Activated CD4-positive, alpha-beta memory T cell treated with anti-CD3 and anti-CD28 coated beads, Interleukin-2, amount 10 ng/mL, durations not matched to agents 7 days and 5 days (primary cell): ENCODE measurements at regions of chr19 and their contacts with region 1.

Region 1: DNA sequence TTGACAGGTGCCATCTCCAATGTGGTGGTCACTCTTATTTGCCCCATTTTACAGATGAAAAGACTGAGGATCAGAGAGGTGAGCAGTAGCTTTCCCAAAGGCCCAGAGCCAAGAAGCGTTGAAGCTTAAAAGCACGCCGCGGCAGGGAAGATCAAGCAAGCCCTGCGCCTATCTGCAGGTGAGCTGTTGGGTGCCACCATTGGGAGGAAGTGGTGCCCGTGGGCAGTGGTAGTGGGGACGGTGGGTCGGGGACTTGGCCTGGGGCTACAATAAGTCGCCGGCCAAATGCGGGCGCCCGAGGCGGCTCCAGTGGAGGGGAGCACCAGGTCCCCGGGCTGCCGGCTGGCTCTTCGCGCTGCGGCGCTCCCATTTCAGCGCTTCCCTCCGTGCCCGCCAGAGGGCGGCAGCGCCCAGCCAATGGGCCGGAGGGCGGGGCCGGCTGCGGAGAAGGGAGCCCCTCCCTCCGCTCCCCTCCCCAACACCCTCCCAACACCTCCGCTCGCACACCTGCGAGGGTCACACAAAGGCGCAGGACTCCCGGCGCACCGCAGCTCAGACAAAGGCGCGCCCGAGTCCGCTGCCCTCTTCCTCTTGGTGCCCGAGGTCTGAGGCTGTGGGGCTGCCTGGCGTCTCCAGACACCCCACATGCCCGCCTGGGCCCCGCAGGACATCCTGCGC is 744 bp upstream of the POU2F2 start:
- DNase-seq: peak; percentile 85
- H3K4me3 Mint-ChIP-seq: peak overlapping the region; percentile 82
- H3K27ac Mint-ChIP-seq: peak overlapping the region; percentile 81
- H3K4me1 Mint-ChIP-seq: peaks cover 64% of the 10 kb centered on the region
- H3K27me3 Mint-ChIP-seq: no peaks in the 10 kb centered on the region

Region 2: DNA sequence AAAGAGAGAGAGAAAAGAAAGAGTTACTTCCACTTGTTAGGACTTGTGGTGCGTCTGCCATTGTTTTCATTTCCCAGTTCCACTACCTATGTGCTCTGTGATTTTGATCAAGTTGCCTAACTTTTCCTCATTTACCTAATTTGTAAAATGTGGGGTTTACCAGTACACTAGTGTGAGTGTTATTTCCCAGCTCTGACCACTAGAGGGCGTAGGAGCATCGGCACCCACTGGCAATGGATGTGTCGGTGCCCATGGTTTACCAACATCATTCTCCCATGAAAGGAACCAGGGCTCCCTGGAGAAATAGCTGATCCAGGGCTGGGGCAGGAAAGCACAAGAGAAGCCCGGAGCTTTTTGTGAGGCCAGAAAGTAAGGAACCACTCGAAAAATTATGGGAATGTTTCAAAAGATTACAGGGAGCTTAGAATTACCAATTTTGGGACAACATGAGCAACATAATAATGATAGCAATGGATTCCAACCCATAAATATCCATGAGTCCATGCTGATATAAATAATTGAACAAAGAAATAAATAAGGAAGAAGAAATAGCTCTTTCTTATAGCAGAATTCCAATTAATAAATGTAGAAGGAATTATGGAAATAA is 491.0 kb before region 1 on chr19:
- CTCF ChIA-PET with region 1: no interaction called
- POLR2A ChIA-PET with region 1: no interaction called
- DNase-seq: peak; percentile 67
- H3K4me3 Mint-ChIP-seq: no peak overlapping the region
- H3K27ac Mint-ChIP-seq: no peak overlapping the region
- H3K4me1 Mint-ChIP-seq: peaks cover 2% of the 10 kb centered on the region
- H3K27me3 Mint-ChIP-seq: peaks cover 18% of the 10 kb centered on the region

Region 3: DNA sequence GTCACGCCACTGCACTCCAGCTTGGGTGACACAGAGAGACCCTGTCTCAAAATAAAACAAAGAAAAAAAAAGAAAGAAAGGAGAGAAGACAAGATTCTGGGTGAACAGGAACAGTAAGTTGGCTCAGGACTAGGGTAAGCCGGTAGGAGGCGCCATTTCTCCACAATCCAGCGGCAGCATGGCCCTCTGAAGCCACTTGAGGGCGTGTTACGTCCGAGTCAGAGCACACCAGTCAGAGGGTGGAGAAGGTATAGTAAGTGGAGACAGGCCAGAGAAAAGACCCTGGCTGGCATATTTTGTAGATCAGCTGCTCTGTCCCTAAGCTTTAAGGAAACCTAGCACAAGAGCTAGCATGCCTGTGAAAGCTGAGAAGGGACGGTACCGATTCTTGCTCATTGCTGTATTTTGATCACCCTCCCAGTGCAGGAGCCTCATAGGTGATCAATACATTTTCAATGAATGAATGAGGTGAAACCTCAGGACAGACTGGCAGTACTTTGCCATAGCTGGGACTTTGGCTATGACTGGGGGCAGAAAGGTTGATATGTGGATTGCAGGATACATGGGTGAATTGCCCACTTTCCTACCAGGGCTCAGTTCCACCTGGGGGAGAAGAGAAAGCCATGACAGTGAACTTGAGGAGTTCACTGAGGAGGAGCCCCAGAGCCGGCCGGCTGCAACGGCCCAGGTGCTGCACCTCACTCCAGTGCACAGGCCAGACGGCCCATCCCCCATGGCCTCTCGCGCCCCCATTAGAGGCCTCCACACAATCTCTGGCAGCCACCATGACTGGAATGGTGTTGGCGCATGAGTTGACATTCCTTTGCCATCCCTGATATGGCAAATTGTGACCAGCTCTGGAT is 24.2 kb before region 1 on chr19:
- CTCF ChIA-PET with region 1: interaction called, 10 read pairs
- POLR2A ChIA-PET with region 1: interaction called, 3 read pairs
- DNase-seq: peak; percentile 92
- H3K4me3 Mint-ChIP-seq: no peak overlapping the region
- H3K27ac Mint-ChIP-seq: no peak overlapping the region
- H3K4me1 Mint-ChIP-seq: peaks cover 34% of the 10 kb centered on the region
- H3K27me3 Mint-ChIP-seq: no peaks in the 10 kb centered on the region

Region 4: DNA sequence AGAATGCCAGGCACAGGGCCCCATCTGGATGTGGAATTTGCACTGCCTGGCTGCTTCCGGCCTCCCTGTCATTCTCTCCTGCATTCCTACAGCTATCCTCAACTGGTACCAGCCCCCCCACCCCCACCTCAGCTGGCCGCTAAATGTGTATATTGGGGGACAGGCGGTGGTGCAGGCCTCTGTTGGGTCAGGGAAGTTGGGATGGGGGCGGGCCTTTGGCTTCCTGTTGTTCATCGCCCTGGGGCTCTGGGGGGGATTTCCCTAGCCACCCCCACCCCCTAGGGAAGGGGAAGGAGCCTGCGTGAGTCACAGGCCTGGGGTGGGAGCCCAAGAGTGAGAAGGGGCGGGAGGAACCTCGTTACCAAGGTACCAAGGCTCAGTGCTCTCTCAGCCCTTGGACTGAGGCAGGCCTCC is 11.3 kb before region 1 on chr19:
- CTCF ChIA-PET with region 1: interaction called, 31 read pairs
- POLR2A ChIA-PET with region 1: interaction called, 19 read pairs
- DNase-seq: peak; percentile 80
- H3K4me3 Mint-ChIP-seq: peak overlapping the region; percentile 73
- H3K27ac Mint-ChIP-seq: peak overlapping the region; percentile 94
- H3K4me1 Mint-ChIP-seq: peaks cover 44% of the 10 kb centered on the region
- H3K27me3 Mint-ChIP-seq: no peaks in the 10 kb centered on the region

Region 5: DNA sequence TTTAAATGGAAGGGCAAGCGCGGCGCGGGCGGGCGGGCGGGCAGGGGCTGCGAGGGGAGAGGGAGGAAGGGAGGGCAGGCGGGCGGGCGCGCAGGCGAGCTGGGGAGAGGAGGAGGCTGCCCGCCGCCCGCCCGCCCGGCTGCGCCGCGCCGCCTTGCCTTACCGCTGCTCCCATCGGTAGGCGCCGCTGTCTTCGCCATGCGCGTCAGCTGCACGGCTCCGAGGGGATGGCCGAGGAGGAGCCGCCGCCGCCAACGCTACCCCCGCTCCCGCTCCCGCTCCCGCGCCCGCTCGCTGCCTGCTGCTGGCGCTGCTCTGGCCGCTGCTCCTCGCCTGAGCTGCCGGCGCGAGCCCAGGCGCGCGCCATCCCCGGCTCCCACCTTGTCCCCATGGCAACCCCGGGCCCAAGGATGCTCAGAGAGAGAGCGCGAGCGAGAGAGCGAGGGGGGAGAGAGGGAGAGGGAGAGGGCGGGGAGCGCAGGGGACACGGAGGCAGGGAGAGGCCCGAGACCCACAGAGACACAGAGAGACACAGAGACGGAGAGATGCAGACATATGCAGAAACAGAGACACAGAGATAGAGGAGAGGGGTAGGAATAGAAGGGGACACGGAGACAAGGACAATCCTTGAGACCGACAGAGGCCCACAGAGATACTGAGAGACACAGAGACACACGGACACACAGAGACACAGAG is 44.1 kb after region 1 on chr19:
- CTCF ChIA-PET with region 1: interaction called, 15 read pairs
- POLR2A ChIA-PET with region 1: interaction called, 5 read pairs
- DNase-seq: peak; percentile 81
- H3K4me3 Mint-ChIP-seq: no peak overlapping the region
- H3K27ac Mint-ChIP-seq: no peak overlapping the region
- H3K4me1 Mint-ChIP-seq: peaks cover 19% of the 10 kb centered on the region
- H3K27me3 Mint-ChIP-seq: peaks cover 30% of the 10 kb centered on the region

Region 6: GRCh38 chr19:42184401-42184861 is 51.4 kb after region 1 on chr19:
- CTCF ChIA-PET with region 1: interaction called, 19 read pairs
- POLR2A ChIA-PET with region 1: no interaction called
- DNase-seq: peak; percentile 72
- H3K4me3 Mint-ChIP-seq: peak overlapping the region; percentile 7
- H3K27ac Mint-ChIP-seq: peak overlapping the region; percentile 89
- H3K4me1 Mint-ChIP-seq: peaks cover 57% of the 10 kb centered on the region
- H3K27me3 Mint-ChIP-seq: no peaks in the 10 kb centered on the region

Region 7: GRCh38 chr19:42199440-42200115 is 66.6 kb after region 1 on chr19:
- CTCF ChIA-PET with region 1: interaction called, 4 read pairs
- POLR2A ChIA-PET with region 1: interaction called, 12 read pairs
- DNase-seq: peak; percentile 91
- H3K4me3 Mint-ChIP-seq: peak overlapping the region; percentile 72
- H3K27ac Mint-ChIP-seq: peak overlapping the region; percentile 98
- H3K4me1 Mint-ChIP-seq: peaks cover 86% of the 10 kb centered on the region
- H3K27me3 Mint-ChIP-seq: no peaks in the 10 kb centered on the region

Region 8: GRCh38 chr19:42219812-42220750 is 87.1 kb after region 1 on chr19 and contains the start of gene ZNF526:
- CTCF ChIA-PET with region 1: interaction called, 12 read pairs
- POLR2A ChIA-PET with region 1: interaction called, 6 read pairs
- DNase-seq: peak; percentile 98
- H3K4me3 Mint-ChIP-seq: peak within 1 kb of the TSS; percentile 93
- H3K27ac Mint-ChIP-seq: peak within 1 kb of the TSS; percentile 88
- H3K4me1 Mint-ChIP-seq: peaks cover 63% of the 10 kb centered on the region
- H3K27me3 Mint-ChIP-seq: no peaks in the 10 kb centered on the region
- total RNA-seq, gene ZNF526: 21.5 to 21.7 TPM